AG04449 (cell line): ENCODE measurements at regions of chr7 and their contacts with region 1.

Region 1: GRCh38 chr7:30062591-30062990 is 34.4 kb downstream of the PLEKHA8 start:
- DNase-seq: no peak
- H3K4me3 ChIP-seq: no peak overlapping the region
- CTCF ChIP-seq: peak; percentile 37

Region 2: DNA sequence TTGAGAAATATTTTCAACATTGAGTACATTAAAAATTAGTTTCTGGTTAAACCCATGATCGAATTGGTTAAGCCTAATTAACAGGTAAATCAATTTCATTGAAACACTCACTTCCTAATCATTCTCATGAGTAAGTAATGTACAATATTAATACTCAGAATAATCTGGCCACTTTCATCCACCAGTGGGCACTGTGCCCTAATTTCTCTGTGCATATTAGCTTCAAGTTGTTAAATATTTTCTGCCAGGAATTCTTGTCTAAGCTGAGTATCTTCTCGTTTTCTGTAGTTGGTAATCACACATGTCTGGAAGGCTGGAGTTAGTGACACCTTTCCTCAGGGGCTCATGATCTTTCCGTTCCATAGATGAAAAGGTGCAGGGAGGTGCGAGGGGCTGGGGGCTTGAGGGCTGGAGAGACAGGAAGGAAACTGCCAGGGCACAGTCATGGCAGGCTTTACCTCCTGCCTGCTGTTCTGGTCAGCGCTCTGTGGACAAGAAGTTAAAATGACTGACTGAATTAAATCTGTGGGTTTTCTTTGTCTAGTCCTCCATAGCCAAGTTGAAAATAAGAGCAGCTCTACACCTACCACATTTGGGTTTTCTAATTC is 184.4 kb before region 1 on chr7:
- CTCF ChIA-PET with region 1: interaction called, 51 read pairs
- POLR2A ChIA-PET with region 1: no interaction called
- DNase-seq: no peak
- H3K4me3 ChIP-seq: no peak overlapping the region
- CTCF ChIP-seq: peak; percentile 47

Region 3: GRCh38 chr7:29935111-29935510 is 127.5 kb before region 1 on chr7:
- CTCF ChIA-PET with region 1: interaction called, 14 read pairs
- POLR2A ChIA-PET with region 1: no interaction called
- DNase-seq: no peak
- H3K4me3 ChIP-seq: no peak overlapping the region
- CTCF ChIP-seq: no peak

Region 4: DNA sequence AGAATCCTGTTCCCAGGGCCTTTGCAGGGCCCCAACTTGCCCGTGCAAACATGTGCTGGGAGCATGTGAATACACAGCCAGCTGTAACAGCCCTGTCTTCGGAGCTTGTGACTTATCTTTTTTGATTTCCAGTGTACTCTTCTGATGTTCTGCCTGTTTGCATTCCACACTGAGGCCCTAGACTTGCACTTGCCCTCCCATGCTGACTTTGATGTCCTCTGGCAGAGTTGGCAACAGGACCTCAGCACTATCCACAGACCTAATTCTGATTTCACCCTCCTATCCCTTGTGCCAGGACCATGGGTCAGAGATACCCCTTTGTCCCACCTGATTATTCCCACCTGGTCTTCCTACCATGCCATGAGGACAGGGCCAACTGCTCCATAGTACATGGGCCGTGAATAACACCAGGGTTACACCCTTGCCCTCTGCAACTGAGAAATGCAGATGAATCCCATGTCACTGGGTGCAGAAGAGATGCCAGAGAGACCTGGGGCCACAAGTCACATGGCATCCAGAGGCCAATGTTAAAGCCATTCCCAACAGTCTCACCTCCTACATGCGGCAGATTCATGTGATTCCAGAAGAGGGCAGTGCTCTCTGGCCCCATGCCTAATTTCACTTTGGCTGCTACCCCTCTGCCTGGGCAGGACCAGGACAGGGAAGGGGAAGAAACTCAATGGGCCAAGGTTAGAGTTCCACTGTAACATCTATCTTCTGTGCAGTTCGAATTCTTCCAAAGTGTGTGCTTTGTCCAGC is 116.0 kb before region 1 on chr7:
- CTCF ChIA-PET with region 1: interaction called, 25 read pairs
- POLR2A ChIA-PET with region 1: no interaction called
- DNase-seq: no peak
- H3K4me3 ChIP-seq: no peak overlapping the region
- CTCF ChIP-seq: peak; percentile 27

Region 5: DNA sequence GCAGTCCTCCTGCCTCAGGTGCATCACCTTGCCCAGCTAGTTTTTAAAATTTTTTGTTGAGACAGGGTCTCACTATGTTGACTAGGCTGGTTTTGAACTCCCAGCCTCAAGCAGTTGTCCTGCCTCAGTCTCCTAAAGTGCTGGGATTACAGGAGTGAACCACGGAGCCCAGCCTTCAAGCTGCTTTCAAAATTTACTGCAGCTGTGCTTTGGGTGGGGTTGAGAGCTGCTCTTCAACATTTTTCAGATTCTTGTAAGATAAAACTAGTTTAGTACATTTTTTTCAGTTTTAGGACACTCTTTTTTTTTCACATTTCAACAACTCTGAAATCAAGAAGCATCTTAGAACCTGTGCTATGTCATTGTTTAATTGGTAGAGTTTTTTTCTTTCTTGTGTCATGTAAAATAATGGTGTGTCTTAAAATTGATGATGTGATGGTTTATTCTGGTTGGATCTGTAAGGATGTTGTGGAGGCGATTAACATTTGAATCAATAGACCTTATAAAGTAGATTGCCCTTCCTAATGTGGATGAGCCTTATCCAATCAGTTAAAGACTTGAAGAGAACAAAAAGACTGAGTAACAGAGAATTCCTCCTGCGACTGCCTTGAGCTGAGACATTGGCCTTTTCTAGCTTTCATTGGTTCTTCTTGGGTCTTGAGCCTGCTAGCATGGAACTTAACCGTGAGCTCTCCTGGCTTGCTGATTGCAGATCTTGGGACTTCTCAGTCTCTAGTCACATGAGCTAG is 20.9 kb before region 1 on chr7:
- CTCF ChIA-PET with region 1: interaction called, 19 read pairs
- POLR2A ChIA-PET with region 1: no interaction called
- DNase-seq: no peak
- H3K4me3 ChIP-seq: no peak overlapping the region
- CTCF ChIP-seq: no peak

Region 6: DNA sequence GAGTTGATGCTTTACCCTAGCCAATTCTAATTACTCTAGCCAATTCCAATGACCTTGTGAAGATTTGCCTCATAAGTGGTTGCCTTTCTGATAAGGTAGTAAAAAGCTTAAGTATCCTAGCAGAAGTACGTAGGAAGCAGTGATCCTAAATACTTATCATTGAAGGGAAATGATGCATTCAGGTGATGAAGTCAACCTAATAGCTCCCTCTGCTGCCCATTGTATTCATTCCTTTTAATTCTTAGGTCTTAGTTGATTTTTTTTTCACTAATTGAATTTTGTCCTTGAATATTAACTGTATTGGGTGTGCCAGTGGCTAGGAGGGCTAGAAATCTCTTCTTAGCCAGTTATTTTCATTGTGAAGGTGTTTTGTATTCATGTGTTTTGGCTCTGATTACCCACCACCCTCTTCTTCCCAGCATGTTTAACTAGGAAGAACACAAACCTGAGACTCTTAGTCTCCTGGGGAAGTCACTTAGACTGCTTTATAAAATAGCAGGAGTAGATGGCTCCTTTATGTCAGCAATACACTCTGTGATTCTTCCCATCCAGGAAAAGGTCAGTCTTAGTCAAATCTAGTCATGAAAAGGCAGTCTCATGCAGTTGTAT is 11.9 kb after region 1 on chr7:
- CTCF ChIA-PET with region 1: interaction called, 83 read pairs
- POLR2A ChIA-PET with region 1: no interaction called
- DNase-seq: no peak
- H3K4me3 ChIP-seq: no peak overlapping the region
- CTCF ChIP-seq: peak; percentile 45